HCT116 (cell line): ENCODE measurements at regions of chr1 and their contacts with region 1.

Region 1: GRCh38 chr1:40951943-40952743 is 27.4 kb upstream of the CTPS1 start:
- DNase-seq: peak; percentile 62
- ATAC-seq: peak; percentile 87
- H3K4me3 ChIP-seq: no peak overlapping the region
- H3K27ac ChIP-seq: no peak overlapping the region
- H3K4me1 ChIP-seq: peaks cover 0 to 28% of the 10 kb centered on the region in 2 experiments; a peak in 2 of 4 replicates
- H3K27me3 ChIP-seq: no peaks in the 10 kb centered on the region
- CTCF ChIP-seq: peak; percentile 91 to 96 (median 95)
- POLR2A ChIP-seq: no peak
- RAD21 ChIP-seq: peak; percentile 100

Region 2: GRCh38 chr1:40531381-40532061 is 420.6 kb before region 1 on chr1 and contains the start of gene ZNF684:
- CTCF ChIA-PET with region 1: interaction called, 10 read pairs
- POLR2A ChIA-PET with region 1: no interaction called
- RAD21 ChIA-PET with region 1: no interaction called
- intact Hi-C with region 1: no loop called
- DNase-seq: peak; percentile 93
- ATAC-seq: peak; percentile 98
- H3K4me3 ChIP-seq: peak within 1 kb of the TSS; percentile 61 to 72
- H3K27ac ChIP-seq: peak within 1 kb of the TSS; percentile 68
- H3K4me1 ChIP-seq: peaks cover 7 to 11% of the 10 kb centered on the region in 2 experiments; a peak in 3 of 4 replicates
- H3K27me3 ChIP-seq: no peaks in the 10 kb centered on the region
- CTCF ChIP-seq: no peak
- POLR2A ChIP-seq: peak; percentile 82
- RAD21 ChIP-seq: no peak
- total RNA-seq, gene ZNF684: 5.3 TPM

Region 3: DNA sequence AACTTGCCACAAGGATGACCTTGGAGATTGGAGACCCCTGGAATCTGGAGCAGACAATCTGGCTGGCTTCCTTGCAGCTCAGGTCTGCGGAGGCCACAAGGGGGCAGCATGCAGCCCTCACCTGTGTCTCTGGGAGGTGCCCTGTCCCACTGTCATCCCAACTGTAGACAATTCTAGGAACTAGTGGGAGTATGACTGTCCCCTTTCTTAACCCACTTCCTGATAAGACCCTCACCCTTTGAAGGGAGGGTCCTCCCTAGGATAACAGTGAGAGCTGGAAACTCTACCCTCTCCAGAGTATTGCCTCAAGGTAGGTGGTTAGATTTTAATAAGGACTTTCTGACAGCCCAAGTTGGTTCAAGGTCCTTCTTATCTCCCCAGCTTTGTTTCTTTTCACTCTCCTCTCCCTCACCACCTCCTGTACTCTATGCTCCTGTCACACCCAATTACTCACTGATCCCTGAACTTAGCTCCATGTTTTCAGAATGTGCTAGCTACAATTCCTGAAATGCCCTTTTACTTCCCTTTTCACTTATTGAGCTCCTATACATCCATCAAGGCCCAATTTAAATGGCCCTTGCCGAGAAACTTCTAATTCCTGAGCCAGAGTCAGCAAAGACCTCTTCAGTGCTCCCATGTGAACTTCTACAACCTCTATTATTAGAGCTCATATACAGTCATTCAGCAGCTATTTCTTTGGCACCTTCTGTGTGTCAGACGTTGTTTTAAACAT is 177.7 kb before region 1 on chr1:
- CTCF ChIA-PET with region 1: interaction called, 42 read pairs
- POLR2A ChIA-PET with region 1: no interaction called
- RAD21 ChIA-PET with region 1: interaction called, 4 to 9 read pairs
- intact Hi-C with region 1: loop called (anchors 1 kb)
- DNase-seq: peak; percentile 18
- ATAC-seq: peak; percentile 87
- H3K4me3 ChIP-seq: no peak overlapping the region
- H3K27ac ChIP-seq: no peak overlapping the region
- H3K4me1 ChIP-seq: peaks cover 0 to 5% of the 10 kb centered on the region in 2 experiments; a peak in 1 of 4 replicates
- H3K27me3 ChIP-seq: no peaks in the 10 kb centered on the region
- CTCF ChIP-seq: peak; percentile 65 to 96 (median 96); a peak in 5 of 6 replicates
- POLR2A ChIP-seq: no peak
- RAD21 ChIP-seq: peak; percentile 64

Region 4: DNA sequence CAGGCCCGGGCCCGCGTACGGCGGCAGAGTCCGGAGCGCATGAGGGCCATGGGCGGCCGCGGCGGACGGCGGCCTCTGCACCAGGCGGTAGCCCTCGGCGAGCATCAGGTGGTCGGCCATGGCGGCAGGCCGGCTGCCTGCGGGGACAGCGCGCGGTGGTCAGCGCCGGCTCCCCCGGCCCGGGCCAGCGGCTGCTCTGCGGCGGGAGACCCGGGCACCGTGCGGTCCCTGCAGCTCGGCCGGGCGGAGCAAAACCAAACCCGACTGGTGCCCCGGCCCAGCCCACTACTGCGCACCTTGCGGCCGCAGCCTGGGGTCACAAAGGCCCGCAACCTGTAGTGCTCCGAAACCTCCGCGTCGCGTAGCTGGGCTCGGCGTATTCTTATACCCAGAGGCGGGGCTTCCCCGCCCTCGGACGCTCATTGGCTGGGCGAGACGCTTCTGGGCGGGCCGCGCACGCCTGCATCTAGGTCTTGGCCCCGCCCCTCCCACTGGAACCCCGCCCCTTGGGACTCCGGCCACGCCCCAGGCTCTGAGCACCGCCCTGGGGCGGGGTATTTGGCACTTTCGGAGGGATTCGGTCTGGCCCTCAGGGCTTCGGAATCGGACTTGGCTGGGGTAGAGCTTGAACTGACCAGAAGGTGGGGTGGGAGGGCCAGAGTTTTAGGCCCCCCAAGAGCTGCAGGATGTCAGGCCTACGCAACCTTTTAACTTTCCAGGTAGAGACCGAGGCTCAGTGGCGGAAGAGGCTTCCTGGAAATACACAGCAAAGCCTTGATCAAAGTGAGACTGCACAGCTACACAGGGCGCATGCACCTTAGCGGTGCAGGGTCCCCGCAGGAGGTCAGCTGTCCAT is 89.9 kb before region 1 on chr1 and contains the start of gene CITED4:
- CTCF ChIA-PET with region 1: interaction called, 29 read pairs
- POLR2A ChIA-PET with region 1: interaction called, 18 read pairs
- RAD21 ChIA-PET with region 1: interaction called, 15 to 27 read pairs
- intact Hi-C with region 1: loop called (anchors 1 kb)
- DNase-seq: peak; percentile 91
- ATAC-seq: peak; percentile 96
- H3K4me3 ChIP-seq: peak within 1 kb of the TSS; percentile 33 to 62
- H3K27ac ChIP-seq: peak within 1 kb of the TSS; percentile 43; the same call in 1 of the 2 replicates
- H3K4me1 ChIP-seq: peaks cover 11 to 37% of the 10 kb centered on the region in 2 experiments; a peak in 3 of 4 replicates
- H3K27me3 ChIP-seq: no peaks in the 10 kb centered on the region
- CTCF ChIP-seq: peak; percentile 39 to 78 (median 45)
- POLR2A ChIP-seq: no peak
- RAD21 ChIP-seq: peak; percentile 91
- total RNA-seq, gene CITED4: 7.8 TPM

Region 5: GRCh38 chr1:40939320-40940059 is 12.7 kb before region 1 on chr1:
- CTCF ChIA-PET with region 1: interaction called, 11 read pairs
- POLR2A ChIA-PET with region 1: interaction called, 3 read pairs
- RAD21 ChIA-PET with region 1: no interaction called
- intact Hi-C with region 1: no loop called
- DNase-seq: no peak
- ATAC-seq: no peak
- H3K4me3 ChIP-seq: no peak overlapping the region
- H3K27ac ChIP-seq: no peak overlapping the region
- H3K4me1 ChIP-seq: peaks cover 4 to 5% of the 10 kb centered on the region in 2 experiments; a peak in 3 of 4 replicates
- H3K27me3 ChIP-seq: no peaks in the 10 kb centered on the region
- CTCF ChIP-seq: no peak
- POLR2A ChIP-seq: no peak
- RAD21 ChIP-seq: no peak

Region 6: DNA sequence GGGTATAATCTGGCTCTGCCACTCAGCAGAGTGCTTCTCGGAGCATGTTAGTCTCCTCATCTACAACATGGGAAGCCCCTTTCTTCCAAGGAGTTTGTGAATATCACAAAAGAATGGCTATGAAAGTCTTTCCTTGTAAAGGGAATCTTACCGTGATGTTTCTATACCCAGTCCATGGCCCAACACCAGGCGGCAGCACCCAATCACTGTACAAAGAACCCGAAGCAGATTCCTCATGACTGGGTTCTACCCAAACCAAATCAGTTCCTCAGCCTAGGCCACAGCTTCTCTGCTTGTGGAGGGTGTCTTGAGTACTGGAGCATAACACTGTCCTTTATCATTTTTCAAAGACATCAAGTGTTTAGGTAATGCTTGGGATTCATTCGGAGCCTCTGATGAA is 86.0 kb after region 1 on chr1:
- CTCF ChIA-PET with region 1: no interaction called
- POLR2A ChIA-PET with region 1: no interaction called
- RAD21 ChIA-PET with region 1: no interaction called
- intact Hi-C with region 1: no loop called
- DNase-seq: no peak
- ATAC-seq: no peak
- H3K4me3 ChIP-seq: no peak overlapping the region
- H3K27ac ChIP-seq: no peak overlapping the region
- H3K4me1 ChIP-seq: no peaks in the 10 kb centered on the region
- H3K27me3 ChIP-seq: no peaks in the 10 kb centered on the region
- CTCF ChIP-seq: 0 out of 6 replicates have a peak, but pooled peaks of 1 of the 3 experiments have one; percentile 6
- POLR2A ChIP-seq: no peak
- RAD21 ChIP-seq: peak; percentile 42

Region 7: DNA sequence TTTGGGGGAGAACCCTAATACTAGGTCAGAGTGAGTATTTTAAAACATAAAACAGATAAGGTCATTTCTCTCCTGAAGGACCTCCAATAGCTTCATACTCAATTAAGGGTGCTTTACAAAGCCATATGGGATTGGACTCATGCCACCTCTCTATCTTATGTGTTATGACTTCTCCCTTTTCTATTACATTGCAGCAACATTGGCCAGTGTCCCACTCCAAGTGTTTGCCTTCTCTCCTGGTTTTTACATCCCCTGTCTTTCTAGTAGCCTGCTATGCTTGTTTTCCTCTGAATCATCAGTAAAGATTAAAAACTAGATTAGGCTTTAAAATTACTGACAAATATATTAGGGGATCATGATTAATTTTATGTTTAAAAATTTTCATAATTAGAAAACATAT is 223.4 kb after region 1 on chr1:
- CTCF ChIA-PET with region 1: no interaction called
- POLR2A ChIA-PET with region 1: no interaction called
- RAD21 ChIA-PET with region 1: no interaction called
- intact Hi-C with region 1: no loop called
- DNase-seq: no peak
- ATAC-seq: no peak
- H3K4me3 ChIP-seq: no peak overlapping the region
- H3K27ac ChIP-seq: no peak overlapping the region
- H3K4me1 ChIP-seq: no peaks in the 10 kb centered on the region
- H3K27me3 ChIP-seq: no peaks in the 10 kb centered on the region
- CTCF ChIP-seq: no peak
- POLR2A ChIP-seq: no peak
- RAD21 ChIP-seq: no peak